Posterior cingulate gyrus (tissue), 11 donors: ENCODE measurements at regions of chr2 and their contacts with region 1.

Region 1: DNA sequence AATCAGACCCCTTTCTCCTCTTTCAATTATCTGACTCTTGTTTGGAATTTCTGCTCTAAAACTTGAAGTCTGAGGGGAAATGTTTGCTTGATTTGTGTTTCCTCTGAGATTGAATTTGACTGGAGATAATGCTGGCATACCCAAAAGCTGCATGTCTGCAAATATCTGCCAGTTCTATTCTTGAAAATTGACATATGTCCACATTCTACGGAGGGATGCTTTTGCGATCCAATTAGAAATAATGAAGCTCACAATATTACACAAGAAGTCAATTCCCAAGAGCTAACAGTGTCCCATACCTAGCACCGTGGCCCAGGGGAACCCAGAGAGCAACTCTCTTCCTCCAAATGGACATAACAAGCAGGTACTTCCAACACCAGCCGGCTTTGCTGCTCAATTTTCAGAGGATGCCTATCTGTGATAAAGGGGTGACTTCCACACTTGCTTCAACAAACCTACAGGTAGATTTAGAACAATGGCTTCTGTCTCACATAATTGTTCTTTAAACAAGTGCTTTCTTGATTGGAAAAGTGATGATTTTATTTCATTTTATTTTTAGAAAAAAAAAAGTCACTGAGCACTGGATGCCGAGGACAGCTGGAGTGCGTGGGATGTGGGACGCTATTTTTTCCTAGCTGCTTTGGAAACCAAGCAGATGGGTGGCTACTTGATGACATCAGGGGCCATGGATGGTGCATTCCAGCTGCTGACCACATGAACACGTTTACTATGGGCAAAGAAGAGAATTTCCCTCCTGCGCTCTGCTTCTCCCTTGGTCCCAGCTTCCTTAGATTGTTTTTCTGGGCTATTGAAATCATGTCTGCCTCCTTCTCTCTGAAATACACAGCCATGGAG is 488.9 kb downstream of the RNF144A start:
- DNase-seq: peak in 5 of 10 donors; percentile 40 to 87 (median 58)

Region 2: DNA sequence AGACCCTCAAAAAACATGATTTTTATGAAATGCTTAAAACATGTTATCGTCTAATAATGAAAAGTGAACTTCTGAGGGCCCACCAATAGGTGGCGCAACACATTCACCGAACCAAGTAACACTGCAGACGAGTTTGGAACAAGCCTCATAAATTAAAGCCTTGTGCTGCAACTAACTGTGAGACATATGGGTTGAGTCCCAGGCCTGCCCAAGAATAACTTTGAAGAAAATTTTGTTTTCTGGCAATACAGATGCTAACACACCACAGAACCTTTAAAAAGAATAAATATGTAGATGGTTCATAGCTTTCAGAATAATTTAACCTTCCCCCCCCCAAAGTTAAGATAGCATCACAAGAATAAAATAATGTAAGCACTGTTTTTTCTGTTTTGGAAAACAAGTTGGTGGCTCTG is 203.0 kb before region 1 on chr2:
- intact Hi-C with region 1: loop called (anchors 10 kb)
- DNase-seq: peak in 7 of 10 donors; percentile 31 to 91 (median 60)

Region 3: GRCh38 chr2:7348761-7349160 is 57.3 kb before region 1 on chr2:
- intact Hi-C with region 1: no loop called
- DNase-seq: no peak